Right ventricle myocardium superior (tissue), 1 donor: ENCODE measurements at regions of chr4 and their contacts with region 1.

Region 1: DNA sequence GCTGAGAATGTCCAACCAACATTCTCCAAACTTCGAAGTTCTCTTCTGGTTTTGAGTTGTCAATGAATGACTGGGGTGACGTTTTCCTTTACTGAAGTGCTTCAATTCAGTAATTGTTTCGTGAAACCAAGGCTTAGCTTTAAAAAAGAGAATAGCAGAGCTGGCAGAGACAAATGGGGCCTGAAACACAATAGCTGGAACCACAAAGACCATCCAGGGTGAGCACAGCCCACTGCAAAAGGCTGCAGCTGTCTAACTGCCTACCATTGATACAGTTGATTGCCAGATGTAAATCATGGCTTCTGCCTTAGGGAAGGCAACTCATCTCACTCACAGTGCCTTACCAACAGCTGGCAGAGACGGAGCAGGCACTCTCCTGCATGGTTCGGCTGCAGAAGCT is 78.7 kb upstream of the ZNF518B start:
- DNase-seq: no peak
- ATAC-seq: no peak

Region 2: DNA sequence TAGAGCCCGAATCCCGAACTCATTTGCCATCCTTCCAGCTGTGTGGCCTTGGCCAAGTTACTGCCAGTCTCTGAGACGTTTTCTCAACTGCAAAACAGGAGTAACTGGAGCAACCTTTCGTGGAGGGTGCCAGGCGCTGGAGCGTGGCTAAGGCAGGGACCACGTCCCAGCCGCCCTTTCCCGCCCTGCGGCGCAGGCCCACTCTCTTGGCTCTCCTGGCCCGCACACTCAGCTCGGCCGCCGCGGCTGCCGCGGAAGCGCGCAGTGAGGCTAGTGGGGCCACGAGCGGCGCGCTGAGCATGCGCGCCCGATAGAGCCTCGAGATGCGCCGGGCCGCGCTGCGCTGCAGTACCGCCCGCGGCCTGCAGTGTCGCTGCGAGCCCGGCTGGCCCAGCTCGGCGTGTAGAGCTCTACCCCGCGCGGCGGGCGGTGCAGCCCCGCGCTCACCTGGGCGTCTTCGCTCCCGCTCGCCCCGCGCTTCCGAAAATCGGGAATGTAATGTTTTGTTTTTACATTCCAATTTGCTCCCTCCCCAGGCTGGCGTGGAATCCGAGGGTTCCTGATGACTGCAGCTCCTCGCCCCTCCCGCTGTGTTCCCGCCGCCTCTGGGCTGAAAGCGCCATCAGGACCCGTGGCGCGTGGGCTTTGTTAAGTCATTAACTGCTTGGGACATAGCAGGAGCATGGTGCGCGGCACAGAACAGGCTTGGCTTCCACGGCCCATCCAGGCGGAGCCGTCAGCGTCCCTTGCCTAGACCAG is 74.6 kb before region 1 on chr4:
- intact Hi-C with region 1: loop called (anchors 2 kb)
- DNase-seq: peak; percentile 73
- ATAC-seq: peak; percentile 84